A673 (cell line): ENCODE measurements at regions of chr15 and their contacts with region 1.

Region 1: GRCh38 chr15:29698030-29698701 is 124.1 kb downstream of the TJP1 start:
- DNase-seq: no peak
- H3K4me3 ChIP-seq: no peak overlapping the region
- H3K27ac ChIP-seq: no peak overlapping the region
- H3K4me1 ChIP-seq: no peaks in the 10 kb centered on the region
- H3K27me3 ChIP-seq: no peaks in the 10 kb centered on the region
- CTCF ChIP-seq: no peak

Region 2: GRCh38 chr15:29925227-29926082 is 227.3 kb after region 1 on chr15:
- CTCF ChIA-PET with region 1: no interaction called
- POLR2A ChIA-PET with region 1: no interaction called
- intact Hi-C with region 1: loop called (anchors 5 kb)
- DNase-seq: peak; percentile 85
- H3K4me3 ChIP-seq: no peak overlapping the region
- H3K27ac ChIP-seq: no peak overlapping the region
- H3K4me1 ChIP-seq: no peaks in the 10 kb centered on the region
- H3K27me3 ChIP-seq: no peaks in the 10 kb centered on the region
- CTCF ChIP-seq: peak; percentile 93